Sigmoid colon (tissue), 7 donors: ENCODE measurements at regions of chr15 and their contacts with region 1.

Region 1: GRCh38 chr15:45714590-45715488 is 80.0 kb downstream of the SQOR start:
- DNase-seq: peak; percentile 81
- H3K4me3 ChIP-seq: peak overlapping the region in 2 of 4 donors; percentile 15 to 18
- H3K27ac ChIP-seq: peak overlapping the region in 3 of 4 donors; percentile 25 to 71 (median 65)
- H3K4me1 ChIP-seq: peaks cover 0 to 34% (median 23%) of the 10 kb centered on the region in 4 donors
- H3K27me3 ChIP-seq: no peaks in the 10 kb centered on the region
- CTCF ChIP-seq: peak; percentile 74 to 90 (median 84)
- EP300 ChIP-seq: no peak
- POLR2A ChIP-seq: no peak

Region 2: DNA sequence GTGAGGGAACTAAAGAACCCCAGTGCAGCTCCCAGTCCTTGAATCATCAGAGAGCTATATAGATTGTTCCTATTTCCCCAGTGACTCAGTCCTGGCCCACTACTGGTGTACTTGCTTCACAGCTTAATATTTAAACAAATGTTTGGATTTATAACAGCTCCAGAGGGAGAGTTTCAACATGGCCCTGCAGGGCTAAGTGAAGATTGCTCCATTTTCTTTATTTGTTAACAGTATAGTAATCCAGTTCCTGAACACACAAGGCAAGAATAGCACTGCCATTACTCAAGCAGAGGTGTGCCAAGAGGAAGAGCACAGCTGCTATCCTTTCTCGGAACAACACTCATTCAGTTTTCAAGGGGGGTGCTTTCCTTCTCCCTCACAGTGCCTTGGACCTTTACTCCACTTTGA is 73.5 kb before region 1 on chr15:
- intact Hi-C with region 1: loop called (anchors 2 kb)
- DNase-seq: peak; percentile 89
- H3K4me3 ChIP-seq: no peak overlapping the region
- H3K27ac ChIP-seq: peak overlapping the region; percentile 74 to 95 (median 90)
- H3K4me1 ChIP-seq: peaks cover 0 to 84% (median 80%) of the 10 kb centered on the region in 4 donors
- H3K27me3 ChIP-seq: no peaks in the 10 kb centered on the region
- CTCF ChIP-seq: peak in 1 of 4 experiments; percentile 49
- EP300 ChIP-seq: peak in 3 of 4 donors; percentile 37 to 75 (median 70)
- POLR2A ChIP-seq: no peak

Region 3: DNA sequence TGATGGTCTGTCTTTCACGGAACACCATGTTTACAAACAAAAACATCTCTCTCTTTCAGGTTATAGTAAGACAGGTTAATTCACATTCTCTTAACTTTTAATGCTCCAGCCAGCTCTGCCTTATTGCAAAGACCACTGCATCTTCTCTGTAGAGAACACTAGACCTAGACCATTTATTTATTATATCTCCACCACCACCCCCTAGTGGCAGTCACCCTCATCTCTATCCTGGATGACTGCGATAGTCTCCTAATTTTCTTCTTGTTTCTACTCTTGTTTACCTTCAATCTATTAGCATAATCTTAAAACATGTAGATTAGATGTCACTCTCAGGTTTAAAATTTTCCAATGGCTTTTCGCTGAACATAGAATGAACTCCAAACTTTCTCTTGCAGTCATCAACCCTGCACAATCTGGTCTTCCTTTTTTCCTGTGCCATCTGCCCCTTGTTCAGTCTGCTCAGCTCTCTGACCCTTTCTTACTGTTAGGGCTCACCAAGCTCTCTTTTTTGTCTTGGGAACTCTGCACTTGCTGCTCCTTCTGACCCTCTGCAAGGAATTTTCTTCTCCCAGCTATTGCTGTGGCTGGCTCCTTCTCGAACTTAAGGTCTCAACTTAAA is 75.6 kb after region 1 on chr15:
- intact Hi-C with region 1: loop called (anchors 2 kb)
- DNase-seq: no peak
- H3K4me3 ChIP-seq: no peak overlapping the region
- H3K27ac ChIP-seq: no peak overlapping the region
- H3K4me1 ChIP-seq: no peaks in the 10 kb centered on the region
- H3K27me3 ChIP-seq: no peaks in the 10 kb centered on the region
- CTCF ChIP-seq: peak in 3 of 4 experiments; percentile 48 to 51 (median 50)
- EP300 ChIP-seq: no peak
- POLR2A ChIP-seq: no peak

Region 4: DNA sequence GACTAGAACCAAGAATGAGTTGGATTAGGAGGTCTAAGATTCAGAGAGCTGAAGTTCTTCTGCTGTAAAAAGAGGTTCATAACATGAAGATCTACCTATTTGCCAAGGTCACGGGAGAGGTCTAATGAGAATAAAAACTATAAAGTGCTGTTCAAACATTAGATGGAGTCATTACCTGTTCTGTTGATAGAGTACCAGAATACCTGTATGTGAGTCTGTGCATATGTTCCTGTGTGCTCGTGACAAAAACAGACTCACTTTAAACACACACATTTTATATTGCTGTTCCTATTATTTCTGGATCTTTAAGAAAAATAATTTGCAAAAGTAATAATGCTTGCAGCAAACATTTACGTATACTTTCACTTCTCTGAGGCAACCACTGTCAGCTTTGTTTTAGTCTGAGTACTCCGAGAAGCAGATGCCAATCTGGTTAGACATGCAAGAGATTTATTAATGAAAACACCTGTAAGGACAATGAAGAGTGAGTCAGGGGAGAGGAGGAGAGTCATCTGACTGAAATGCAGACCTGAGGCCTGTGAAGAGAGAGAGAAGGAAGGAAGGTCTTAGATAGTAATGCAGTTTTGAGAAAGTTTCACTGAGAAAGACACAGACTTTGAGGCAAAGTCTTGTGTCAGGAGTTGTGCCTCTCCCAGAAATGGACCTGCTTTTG is 141.2 kb after region 1 on chr15:
- intact Hi-C with region 1: loop called (anchors 10 kb)
- DNase-seq: no peak
- H3K4me3 ChIP-seq: no peak overlapping the region
- H3K27ac ChIP-seq: no peak overlapping the region
- H3K4me1 ChIP-seq: peaks cover 0 to 15% (median 7%) of the 10 kb centered on the region in 4 donors
- H3K27me3 ChIP-seq: no peaks in the 10 kb centered on the region
- CTCF ChIP-seq: no peak
- EP300 ChIP-seq: no peak
- POLR2A ChIP-seq: no peak

Region 5: GRCh38 chr15:45891766-45892165 is 176.9 kb after region 1 on chr15:
- intact Hi-C with region 1: loop called (anchors 2 kb)
- DNase-seq: no peak
- H3K4me3 ChIP-seq: no peak overlapping the region
- H3K27ac ChIP-seq: peak overlapping the region in 3 of 4 donors; percentile 34 to 66 (median 54)
- H3K4me1 ChIP-seq: peaks cover 0 to 19% (median 15%) of the 10 kb centered on the region in 4 donors
- H3K27me3 ChIP-seq: no peaks in the 10 kb centered on the region
- CTCF ChIP-seq: no peak
- EP300 ChIP-seq: peak in 3 of 4 donors; percentile 33 to 55 (median 51)
- POLR2A ChIP-seq: no peak

Region 6: GRCh38 chr15:46280762-46281542 is 566.1 kb after region 1 on chr15:
- intact Hi-C with region 1: loop called (anchors 10 kb)
- DNase-seq: no peak
- H3K4me3 ChIP-seq: no peak overlapping the region
- H3K27ac ChIP-seq: no peak overlapping the region
- H3K4me1 ChIP-seq: no peaks in the 10 kb centered on the region
- H3K27me3 ChIP-seq: no peaks in the 10 kb centered on the region
- CTCF ChIP-seq: no peak
- EP300 ChIP-seq: no peak
- POLR2A ChIP-seq: no peak

Region 7: DNA sequence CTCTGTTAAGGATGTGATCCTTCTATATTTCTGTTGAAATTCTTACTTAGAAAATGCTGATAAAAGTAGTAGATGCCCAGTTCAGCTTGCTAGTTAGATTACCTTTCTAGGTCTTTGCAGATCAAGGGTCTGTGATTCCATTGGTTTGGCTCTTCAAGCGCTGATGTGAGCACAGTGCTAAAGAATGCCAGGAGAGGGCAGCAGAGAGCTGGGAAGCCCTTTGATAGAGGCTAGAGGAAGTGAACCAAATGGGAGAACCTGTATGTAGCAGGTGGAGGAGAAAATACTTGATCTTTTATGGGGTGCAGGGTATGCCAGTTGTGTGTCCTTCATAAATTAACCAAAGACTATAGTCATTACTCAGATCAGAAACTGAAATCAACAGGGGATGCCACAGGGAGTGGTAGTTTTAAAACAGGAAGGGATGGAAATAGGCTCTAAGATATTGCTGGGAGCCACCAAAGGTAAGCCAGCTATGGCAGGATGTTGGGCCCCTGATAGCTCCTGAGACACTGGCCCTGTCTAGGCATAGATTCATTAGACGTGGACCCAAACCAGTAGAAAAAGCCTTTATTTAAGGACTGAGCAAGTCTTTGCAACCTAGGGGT is 597.4 kb after region 1 on chr15:
- intact Hi-C with region 1: loop called (anchors 5 kb)
- DNase-seq: peak; percentile 77
- H3K4me3 ChIP-seq: no peak overlapping the region
- H3K27ac ChIP-seq: no peak overlapping the region
- H3K4me1 ChIP-seq: no peaks in the 10 kb centered on the region
- H3K27me3 ChIP-seq: no peaks in the 10 kb centered on the region
- CTCF ChIP-seq: peak; percentile 64 to 83 (median 74)
- EP300 ChIP-seq: no peak
- POLR2A ChIP-seq: no peak